Heart left ventricle (tissue), 16 donors: ENCODE measurements at regions of chr16 and their contacts with region 1.

Region 1: GRCh38 chr16:30585400-30586189 is at the start of gene ZNF785:
- DNase-seq: peak; percentile 94 to 98 (median 98)
- ATAC-seq: peak; percentile 98 to 100 (median 99)
- H3K4me3 ChIP-seq: peak within 1 kb of the TSS; percentile 54 to 93 (median 74)
- H3K27ac ChIP-seq: peak within 1 kb of the TSS; percentile 83 to 97 (median 88)
- H3K4me1 ChIP-seq: peaks cover 0 to 25% (median 10%) of the 10 kb centered on the region in 12 donors
- H3K27me3 ChIP-seq: no peaks in the 10 kb centered on the region
- CTCF ChIP-seq: peak in 11 of 12 donors; percentile 10 to 57 (median 33)
- POLR2A ChIP-seq: peak in 1 of 2 donors; percentile 54
- total RNA-seq, gene ZNF785: 2.9 to 10.9 (median 4.8) TPM

Region 2: GRCh38 chr16:30534368-30535105 is 51.1 kb before region 1 on chr16 and contains the start of gene ZNF747:
- intact Hi-C with region 1: loop called in 2 of 10 experiments (anchors 5 kb)
- DNase-seq: peak; percentile 95 to 96 (median 96)
- ATAC-seq: peak; percentile 88 to 95 (median 90)
- H3K4me3 ChIP-seq: peak within 1 kb of the TSS; percentile 31 to 94 (median 82)
- H3K27ac ChIP-seq: peak within 1 kb of the TSS; percentile 86 to 99 (median 94)
- H3K4me1 ChIP-seq: peaks cover 0 to 34% (median 21%) of the 10 kb centered on the region in 12 donors
- H3K27me3 ChIP-seq: no peaks in the 10 kb centered on the region
- CTCF ChIP-seq: peak in 2 of 12 donors; percentile 12 to 13
- POLR2A ChIP-seq: peak in 1 of 2 donors; percentile 63
- total RNA-seq, gene ZNF747: 8.6 to 15.2 (median 10.5) TPM

Region 3: DNA sequence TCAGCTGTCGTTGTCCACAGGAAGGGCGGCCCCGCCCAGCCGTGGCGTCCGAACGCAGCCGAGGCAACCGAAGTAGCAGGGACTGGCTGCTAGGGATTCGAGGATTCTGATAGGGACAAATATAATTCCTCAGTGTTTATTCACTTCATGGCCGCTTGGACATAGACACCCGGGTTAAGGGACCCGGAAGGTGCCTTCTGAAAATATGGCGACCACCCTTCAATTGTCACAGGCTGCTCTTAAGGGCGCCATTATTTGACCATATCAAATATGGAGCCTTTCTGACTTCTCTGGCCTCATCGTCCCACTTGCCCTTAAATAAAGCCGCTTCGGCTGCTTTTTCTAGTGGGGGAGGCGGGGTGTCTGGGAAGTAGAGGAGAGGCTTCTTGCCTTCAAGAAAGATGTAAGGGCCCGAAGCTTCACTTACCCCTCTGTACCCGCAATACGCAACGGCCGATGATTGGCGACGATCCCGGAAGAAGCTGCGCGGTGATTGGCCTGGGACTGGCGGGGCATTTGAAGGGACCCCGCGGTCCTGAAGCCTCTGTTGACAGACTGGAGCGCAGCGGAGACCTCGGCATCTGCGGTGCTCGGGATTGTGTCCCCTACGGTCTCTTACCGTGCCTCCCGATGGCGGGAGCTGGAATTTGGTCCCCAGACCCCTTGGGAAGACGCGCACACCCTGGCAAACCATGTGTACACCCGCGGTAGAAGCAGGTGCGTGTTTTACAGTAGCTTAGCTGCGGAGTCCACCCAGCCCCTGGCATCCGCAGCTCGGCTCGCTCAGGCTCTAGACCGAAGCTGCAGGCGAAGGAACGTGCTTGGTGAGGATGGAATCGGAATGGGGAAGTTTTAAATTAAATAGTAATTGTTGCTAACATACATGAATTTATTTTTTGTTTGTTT is 13.6 kb before region 1 on chr16 and contains the start of gene ZNF688:
- intact Hi-C with region 1: loop called in 3 of 10 experiments (anchors 1 kb)
- DNase-seq: peak; percentile 95 to 96 (median 96)
- ATAC-seq: peak; percentile 90 to 95 (median 92)
- H3K4me3 ChIP-seq: peak within 1 kb of the TSS; percentile 49 to 99 (median 83)
- H3K27ac ChIP-seq: peak within 1 kb of the TSS; percentile 88 to 100 (median 98)
- H3K4me1 ChIP-seq: peaks cover 3 to 41% (median 20%) of the 10 kb centered on the region in 12 donors
- H3K27me3 ChIP-seq: no peaks in the 10 kb centered on the region
- CTCF ChIP-seq: no peak
- POLR2A ChIP-seq: peak in 1 of 2 donors; percentile 44
- total RNA-seq, gene ZNF688: 10.0 to 14.3 (median 11.6) TPM

Region 4: DNA sequence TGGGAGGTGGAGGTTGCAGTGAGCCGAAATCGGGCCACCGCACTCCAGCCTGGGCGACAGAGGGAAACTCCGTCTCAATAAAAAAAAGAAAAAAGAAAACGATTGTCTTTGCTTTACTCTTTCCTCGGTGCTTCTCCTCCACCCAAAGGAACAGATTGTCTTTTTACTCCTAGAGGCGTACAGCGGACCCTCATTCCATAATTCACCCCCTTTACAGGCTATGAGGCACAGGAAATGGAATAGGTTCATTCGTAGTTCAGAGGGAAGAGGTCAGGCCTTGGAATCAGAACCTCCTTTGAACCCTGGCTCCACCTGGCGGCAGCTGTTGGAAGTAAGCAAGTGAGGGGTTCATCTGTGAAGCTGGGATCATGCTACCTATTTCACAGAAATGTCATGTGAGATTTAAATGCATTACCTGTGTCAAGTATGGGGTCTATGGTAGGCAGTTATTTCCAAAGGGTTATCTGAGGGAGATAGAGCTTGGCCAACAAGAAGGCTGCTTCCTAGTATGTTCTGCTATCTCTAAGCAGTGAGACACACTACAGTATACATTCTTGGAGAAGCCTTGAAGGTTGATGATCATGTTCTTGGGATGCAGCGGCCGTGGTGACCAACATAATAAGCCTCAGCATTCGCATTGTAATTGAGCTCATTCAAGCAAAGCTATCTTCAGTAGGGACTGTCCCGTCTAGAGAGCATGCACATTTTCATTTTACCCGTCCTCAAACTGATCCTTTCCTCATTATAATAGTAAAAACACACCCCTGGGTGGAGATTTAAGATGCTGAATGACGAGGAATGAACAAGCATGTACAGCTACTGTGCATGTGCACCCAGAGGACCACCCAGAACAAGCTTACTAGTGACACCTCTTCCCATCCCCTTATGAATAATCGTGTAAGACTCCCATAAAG is 43.3 kb after region 1 on chr16:
- intact Hi-C with region 1: loop called in 2 of 10 experiments (anchors 5 kb)
- DNase-seq: peak; percentile 77 to 91 (median 86)
- ATAC-seq: peak; percentile 63 to 91 (median 90)
- H3K4me3 ChIP-seq: peak overlapping the region in 9 of 12 donors; percentile 15 to 45 (median 34)
- H3K27ac ChIP-seq: peak overlapping the region in 8 of 12 donors; percentile 34 to 67 (median 55)
- H3K4me1 ChIP-seq: peaks cover 0 to 16% (median 1%) of the 10 kb centered on the region in 12 donors
- H3K27me3 ChIP-seq: no peaks in the 10 kb centered on the region
- CTCF ChIP-seq: peak; percentile 82 to 95 (median 90)
- POLR2A ChIP-seq: no peak

Region 5: GRCh38 chr16:30650369-30651123 is 65.0 kb after region 1 on chr16 and contains the start of gene PRR14:
- intact Hi-C with region 1: loop called in 3 of 10 experiments (anchors 5 to 10 kb)
- DNase-seq: peak; percentile 100
- ATAC-seq: peak; percentile 92 to 95 (median 93)
- H3K4me3 ChIP-seq: peak within 1 kb of the TSS; percentile 60 to 93 (median 76)
- H3K27ac ChIP-seq: peak within 1 kb of the TSS; percentile 69 to 99 (median 95)
- H3K4me1 ChIP-seq: peaks cover 0 to 26% (median 14%) of the 10 kb centered on the region in 12 donors
- H3K27me3 ChIP-seq: no peaks in the 10 kb centered on the region
- CTCF ChIP-seq: peak in 10 of 12 donors; percentile 19 to 54 (median 34)
- POLR2A ChIP-seq: peak in 1 of 2 donors; percentile 32
- total RNA-seq, gene PRR14: 12.3 to 26.6 (median 20.2) TPM

Region 6: DNA sequence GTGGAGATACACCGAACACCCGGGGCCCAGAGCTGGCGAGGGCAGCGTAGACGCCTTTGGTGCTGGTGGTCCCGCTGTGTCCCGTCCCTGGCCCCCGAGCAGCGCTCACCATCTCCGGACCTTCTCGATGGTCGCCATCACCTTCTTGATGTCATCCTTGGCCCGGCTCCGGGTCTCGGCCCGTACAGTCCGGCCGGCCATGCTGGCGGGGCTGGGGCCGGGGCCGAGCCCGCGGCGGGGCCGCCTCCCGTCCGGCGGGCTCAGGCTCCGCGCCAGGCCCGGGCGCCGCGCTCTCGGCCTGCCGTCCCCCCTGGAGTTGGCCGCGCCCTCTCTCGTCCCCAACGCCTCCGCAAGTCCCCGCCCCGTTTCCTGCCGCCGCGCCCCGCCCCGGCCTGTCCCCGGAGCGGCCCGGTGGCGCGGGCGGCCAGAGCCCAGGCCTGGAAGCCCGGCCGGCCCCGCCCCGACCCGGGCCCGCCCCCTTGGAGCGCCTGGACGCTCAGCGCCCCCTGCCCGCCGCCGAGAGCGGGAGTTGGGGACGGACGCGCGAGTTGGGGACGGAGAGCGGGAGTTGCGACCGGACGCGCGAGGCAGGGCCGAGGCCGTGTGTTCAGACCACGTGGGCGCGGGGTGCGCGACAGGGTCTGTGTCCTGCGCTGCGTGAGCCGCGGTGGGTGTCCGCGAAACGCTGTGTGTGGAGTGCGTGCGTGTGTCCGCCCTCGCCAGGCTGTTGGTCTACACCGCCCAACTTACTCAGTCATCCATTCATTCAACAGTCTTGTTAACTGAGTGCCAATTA is 308.3 kb after region 1 on chr16 and contains the start of gene BCL7C:
- intact Hi-C with region 1: no loop called
- DNase-seq: peak; percentile 96 to 97 (median 96)
- ATAC-seq: peak; percentile 50 to 90 (median 81)
- H3K4me3 ChIP-seq: peak within 1 kb of the TSS; percentile 79 to 98 (median 89)
- H3K27ac ChIP-seq: peak within 1 kb of the TSS; percentile 81 to 99 (median 95)
- H3K4me1 ChIP-seq: peaks cover 0 to 46% (median 33%) of the 10 kb centered on the region in 12 donors
- H3K27me3 ChIP-seq: no peaks in the 10 kb centered on the region
- CTCF ChIP-seq: peak; percentile 21 to 82 (median 56)
- POLR2A ChIP-seq: peak in 1 of 2 donors; percentile 33
- total RNA-seq, gene BCL7C: 23.1 to 35.5 (median 28.1) TPM